ENCODE measurements at regions of chr10 and their contacts with region 1.

Region 1: DNA sequence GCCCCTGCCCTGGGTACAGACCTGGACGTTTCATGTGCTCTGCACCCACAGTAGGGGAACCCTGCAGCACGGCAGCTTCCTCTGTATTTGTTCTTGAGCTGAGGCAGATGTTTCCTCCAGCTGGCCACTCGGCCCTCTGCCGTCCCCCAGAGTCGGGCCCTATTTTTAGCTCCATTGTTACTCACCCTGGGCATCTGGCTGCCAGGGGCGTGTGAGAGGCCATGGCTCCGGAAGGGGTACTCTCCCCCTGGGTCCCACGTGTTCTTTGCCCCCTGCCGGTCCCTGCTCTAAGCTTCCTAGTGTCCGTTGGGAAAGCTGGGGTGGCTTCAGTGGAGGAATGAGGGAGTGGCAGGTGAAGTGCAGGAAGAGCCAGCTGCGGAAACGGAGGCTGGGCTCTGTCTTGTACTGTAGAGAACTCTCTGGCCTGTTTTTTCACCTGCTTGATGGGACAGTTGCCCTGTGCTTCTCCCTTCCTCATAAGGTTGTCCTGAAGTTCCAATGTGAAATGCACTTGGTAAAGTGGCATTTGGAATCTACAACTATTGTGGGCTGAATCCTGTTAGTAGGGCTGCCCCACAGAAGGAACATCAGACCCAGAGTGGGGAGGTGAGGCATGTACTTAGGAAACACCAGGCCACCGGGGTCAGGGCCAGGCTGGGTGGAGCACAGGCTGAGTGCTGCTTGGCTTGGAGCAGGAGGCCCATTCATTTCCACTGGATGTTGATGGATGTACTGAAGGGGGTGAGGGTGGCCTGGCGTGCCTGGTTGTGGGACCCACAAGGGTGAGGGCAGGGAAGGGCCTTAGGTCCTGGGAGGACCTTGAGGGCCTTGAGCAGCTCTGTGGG is 30.6 kb downstream of the PALD1 start:
- DNase-seq: no peak
- ATAC-seq: peak; percentile 46
- H3K4me3 ChIP-seq: peak overlapping the region in 1 of 5 experiments; percentile 8
- H3K4me3 Mint-ChIP-seq: peak overlapping the region; percentile 63
- H3K27ac ChIP-seq: no peak overlapping the region
- H3K27ac Mint-ChIP-seq: peak overlapping the region; percentile 56
- H3K4me1 ChIP-seq: peaks cover 24 to 25% of the 10 kb centered on the region in 2 donors
- H3K4me1 Mint-ChIP-seq: peaks cover 35% of the 10 kb centered on the region
- H3K27me3 ChIP-seq: peaks cover 0 to 5% (median 0%) of the 10 kb centered on the region in 4 experiments
- H3K27me3 Mint-ChIP-seq: no peaks in the 10 kb centered on the region
- CTCF ChIP-seq: no peak

Region 2: DNA sequence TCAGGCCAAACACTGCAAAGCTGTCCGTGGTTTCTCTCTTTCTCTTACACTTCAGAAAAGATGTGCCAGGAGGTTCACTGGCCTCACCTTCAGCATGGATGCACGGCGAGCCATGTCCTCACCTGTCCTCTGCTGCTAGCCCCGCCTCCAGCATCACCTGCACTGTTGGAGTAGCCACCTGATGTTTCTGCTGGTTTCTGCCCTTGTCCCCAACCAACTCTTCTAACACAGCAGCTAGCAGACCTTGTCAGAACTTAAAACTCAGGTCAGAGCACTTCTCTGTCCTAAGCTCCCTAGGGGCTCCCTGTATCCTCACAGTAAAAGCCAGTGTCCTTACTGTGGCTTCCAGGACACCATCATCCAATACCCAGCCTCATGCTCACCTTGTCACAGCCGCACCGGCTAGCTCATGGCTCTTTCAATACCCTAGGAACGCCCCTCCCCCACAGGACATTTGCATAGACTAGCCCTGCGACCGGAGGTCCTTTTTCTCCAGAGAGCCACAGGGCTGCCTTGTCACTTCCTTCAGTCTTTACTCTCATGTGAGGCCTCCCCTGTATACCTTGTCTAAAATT is 15.4 kb before region 1 on chr10:
- CTCF ChIA-PET with region 1: interaction called, 5 read pairs
- POLR2A ChIA-PET with region 1: no interaction called
- intact Hi-C with region 1: loop called (anchors 1 kb)
- DNase-seq: peak; percentile 78
- ATAC-seq: peak; percentile 73
- H3K4me3 ChIP-seq: peak overlapping the region in 3 of 5 experiments; percentile 13 to 57 (median 28)
- H3K4me3 Mint-ChIP-seq: peak overlapping the region; percentile 68
- H3K27ac ChIP-seq: peak overlapping the region; percentile 81 to 88
- H3K27ac Mint-ChIP-seq: peak overlapping the region; percentile 89
- H3K4me1 ChIP-seq: peaks cover 65 to 69% of the 10 kb centered on the region in 2 donors
- H3K4me1 Mint-ChIP-seq: peaks cover 76% of the 10 kb centered on the region
- H3K27me3 ChIP-seq: no peaks in the 10 kb centered on the region
- H3K27me3 Mint-ChIP-seq: no peaks in the 10 kb centered on the region
- CTCF ChIP-seq: no peak

Region 3: GRCh38 chr10:70622981-70623844 is 114.1 kb after region 1 on chr10:
- CTCF ChIA-PET with region 1: no interaction called
- POLR2A ChIA-PET with region 1: no interaction called
- intact Hi-C with region 1: no loop called
- DNase-seq: no peak
- ATAC-seq: no peak
- H3K4me3 ChIP-seq: no peak overlapping the region
- H3K4me3 Mint-ChIP-seq: no peak overlapping the region
- H3K27ac ChIP-seq: no peak overlapping the region
- H3K27ac Mint-ChIP-seq: no peak overlapping the region
- H3K4me1 ChIP-seq: no peaks in the 10 kb centered on the region
- H3K4me1 Mint-ChIP-seq: no peaks in the 10 kb centered on the region
- H3K27me3 ChIP-seq: peaks cover 0 to 4% (median 0%) of the 10 kb centered on the region in 4 experiments
- H3K27me3 Mint-ChIP-seq: peaks cover 14% of the 10 kb centered on the region
- CTCF ChIP-seq: no peak

Measured in B cell (primary cell).